Dorsolateral prefrontal cortex (tissue), 120 donors: ENCODE measurements at regions of chr20 and their contacts with region 1.

Region 1: GRCh38 chr20:57089691-57090150 is 176.7 kb downstream of the BMP7 start:
- DNase-seq: peak; percentile 32 to 87 (median 74)
- H3K4me3 ChIP-seq: no peak overlapping the region
- H3K27ac ChIP-seq: no peak overlapping the region
- H3K27me3 ChIP-seq: peaks cover 0 to 29% (median 0%) of the 10 kb centered on the region in 45 donors
- CTCF ChIP-seq: peak; percentile 73 to 99 (median 96)

Region 2: GRCh38 chr20:57030611-57031600 is 58.8 kb before region 1 on chr20:
- intact Hi-C with region 1: no loop called
- DNase-seq: no peak
- H3K4me3 ChIP-seq: no peak overlapping the region
- H3K27ac ChIP-seq: no peak overlapping the region
- H3K27me3 ChIP-seq: peaks cover 0 to 39% (median 6%) of the 10 kb centered on the region in 45 donors
- CTCF ChIP-seq: no peak

Region 3: DNA sequence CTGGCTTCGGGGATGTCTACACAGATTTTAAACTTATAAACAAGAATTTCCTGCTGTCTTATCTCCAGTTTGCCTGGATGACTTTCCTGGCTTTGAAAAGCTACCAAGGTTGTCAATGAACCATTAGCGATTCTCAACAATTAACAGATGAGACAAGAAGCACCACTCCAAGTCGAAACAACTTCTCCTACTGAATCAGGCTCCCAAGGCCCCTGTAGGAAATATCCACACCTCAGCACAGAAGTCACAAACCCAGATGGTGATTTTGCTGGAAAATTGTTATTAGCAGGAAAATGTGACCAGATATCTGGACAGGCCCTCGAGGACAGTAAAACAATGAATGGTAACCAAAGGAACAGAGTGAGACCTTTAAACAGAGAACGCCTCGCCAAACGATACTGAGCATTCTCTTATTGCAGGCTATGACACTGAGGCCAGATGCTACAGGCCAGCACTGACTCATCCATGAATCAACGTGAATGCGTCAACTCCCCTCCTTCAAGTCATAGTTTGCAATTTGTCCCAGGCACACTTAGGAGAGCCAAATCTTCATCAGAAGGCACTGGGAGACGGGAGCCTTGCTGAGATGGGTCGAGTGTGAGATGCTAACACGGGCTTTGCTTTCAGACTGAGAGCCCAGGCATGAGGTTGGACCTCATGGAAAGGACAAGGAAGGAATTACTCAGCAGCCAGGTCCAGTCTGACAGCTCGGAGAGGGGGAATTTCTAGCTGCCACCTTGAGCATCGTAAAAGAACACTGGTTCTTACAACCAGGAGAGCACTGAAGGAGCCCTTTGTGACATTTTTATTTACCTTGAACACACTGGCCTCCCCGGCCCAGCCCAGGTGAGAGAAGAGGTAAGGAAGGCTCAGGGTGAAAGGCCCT is 115.9 kb after region 1 on chr20:
- intact Hi-C with region 1: no loop called
- DNase-seq: no peak
- H3K4me3 ChIP-seq: no peak overlapping the region
- H3K27ac ChIP-seq: no peak overlapping the region
- H3K27me3 ChIP-seq: peaks cover 0 to 2% (median 0%) of the 10 kb centered on the region in 45 donors
- CTCF ChIP-seq: no peak

Region 4: DNA sequence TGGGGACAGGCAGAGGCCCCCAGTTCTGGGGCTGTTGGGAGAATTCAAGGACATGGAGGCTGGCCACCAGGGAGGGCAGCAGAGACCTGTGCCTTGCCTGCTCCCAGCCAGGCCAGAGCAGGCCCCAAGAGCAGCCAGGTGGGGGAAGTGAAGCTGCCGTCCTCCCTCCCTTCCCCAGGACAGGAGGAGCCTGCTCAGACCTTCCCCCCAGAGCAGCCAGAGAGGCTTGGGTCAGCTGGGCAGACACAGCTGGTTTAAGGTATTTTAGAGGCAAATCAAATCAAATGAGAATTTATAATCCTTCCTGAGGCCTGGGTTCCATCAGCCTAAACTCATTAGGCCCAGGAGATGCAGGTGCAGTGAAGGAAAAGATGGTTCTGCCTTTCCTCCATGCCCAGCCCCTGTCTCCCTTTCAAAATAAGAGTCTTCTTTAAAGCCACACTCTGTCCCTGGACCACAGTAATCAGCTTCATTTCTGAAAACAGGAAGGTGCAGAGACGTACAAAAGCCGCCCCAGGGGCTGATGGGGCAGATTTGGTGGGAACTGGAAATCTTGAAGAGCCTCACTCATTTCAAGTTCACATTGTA is 155.0 kb after region 1 on chr20:
- intact Hi-C with region 1: loop called in 1 of 2 experiments (anchors 5 kb)
- DNase-seq: no peak
- H3K4me3 ChIP-seq: no peak overlapping the region
- H3K27ac ChIP-seq: peak overlapping the region in 5 of 59 donors; percentile 3 to 49 (median 26)
- H3K27me3 ChIP-seq: peaks cover 0 to 21% (median 0%) of the 10 kb centered on the region in 45 donors
- CTCF ChIP-seq: no peak

Region 5: GRCh38 chr20:57266291-57267157 is 176.8 kb after region 1 on chr20 and contains the start of gene BMP7:
- intact Hi-C with region 1: loop called in 1 of 2 experiments (anchors 10 kb)
- DNase-seq: peak in 3 of 10 donors; percentile 32 to 59 (median 49)
- H3K4me3 ChIP-seq: peak within 1 kb of the TSS; percentile 31 to 73 (median 58)
- H3K27ac ChIP-seq: peak within 1 kb of the TSS in 47 of 59 donors; percentile 12 to 83 (median 65)
- H3K27me3 ChIP-seq: peaks cover 0 to 76% (median 49%) of the 10 kb centered on the region in 45 donors
- CTCF ChIP-seq: no peak
- total RNA-seq, gene BMP7: 16.7 to 67.3 (median 29.8) TPM

Region 6: GRCh38 chr20:57351042-57351783 is 261.5 kb after region 1 on chr20 and contains the start of gene RAE1:
- intact Hi-C with region 1: loop called (anchors 1 to 2 kb)
- DNase-seq: peak; percentile 86 to 94 (median 91)
- H3K4me3 ChIP-seq: peak within 1 kb of the TSS; percentile 62 to 100 (median 97)
- H3K27ac ChIP-seq: peak within 1 kb of the TSS in 57 of 59 donors; percentile 53 to 93 (median 85)
- H3K27me3 ChIP-seq: peaks cover 0 to 8% (median 0%) of the 10 kb centered on the region in 45 donors
- CTCF ChIP-seq: peak in 13 of 56 donors; percentile 4 to 45 (median 19)
- total RNA-seq, gene RAE1: 16.2 to 42.7 (median 30.2) TPM

Region 7: DNA sequence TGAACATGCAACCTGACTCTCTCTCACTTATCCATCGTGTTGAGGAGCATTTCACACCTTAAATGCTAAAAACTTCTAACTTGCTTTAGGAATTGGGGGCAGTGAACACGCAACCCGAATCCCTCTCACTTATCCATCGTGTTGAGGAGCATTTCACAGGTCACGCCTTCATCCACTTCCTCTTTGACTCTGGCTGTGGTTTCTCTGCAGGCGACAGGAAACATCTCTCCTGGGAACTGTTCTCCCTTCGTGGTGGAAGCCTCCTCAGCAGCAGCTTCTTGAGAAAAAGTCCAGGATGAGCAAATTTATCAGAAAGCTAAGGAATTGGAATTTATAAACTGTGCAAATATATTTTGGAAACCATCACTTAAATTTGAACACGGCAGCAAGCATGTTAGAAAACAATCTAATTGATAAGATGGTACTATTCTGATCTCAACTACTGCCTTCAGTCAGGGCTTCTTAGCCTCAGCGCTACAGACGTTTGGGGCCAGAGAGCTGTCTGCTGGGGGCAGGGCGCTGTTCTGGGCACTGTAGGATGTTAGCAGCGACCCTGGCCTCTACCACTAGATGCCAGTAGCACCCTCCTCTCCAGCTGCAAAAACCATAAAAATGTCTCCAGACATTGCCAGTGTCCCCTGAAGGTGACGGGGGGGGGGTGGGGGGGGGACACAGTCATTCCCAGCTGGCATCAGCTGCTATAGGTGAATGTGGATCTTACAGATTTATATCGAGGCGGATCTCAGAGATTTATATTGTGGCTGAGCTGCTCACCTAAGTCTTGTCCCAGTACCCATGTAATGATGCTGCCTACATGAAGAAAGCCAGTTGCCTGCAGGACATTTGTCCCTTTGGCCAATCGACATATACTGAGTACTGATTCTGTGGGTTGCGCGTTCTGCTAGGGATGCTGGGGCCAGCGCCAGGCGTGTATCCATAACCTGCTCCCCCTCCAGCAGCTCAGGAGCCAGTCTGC is 409.0 kb after region 1 on chr20:
- intact Hi-C with region 1: loop called (anchors 5 to 10 kb)
- DNase-seq: peak in 2 of 10 donors; percentile 29 to 47
- H3K4me3 ChIP-seq: no peak overlapping the region
- H3K27ac ChIP-seq: no peak overlapping the region
- H3K27me3 ChIP-seq: no peaks in the 10 kb centered on the region
- CTCF ChIP-seq: peak in 23 of 56 donors; percentile 4 to 42 (median 22)